ENCODE measurements at regions of chr7 and their contacts with region 1.

Region 1: DNA sequence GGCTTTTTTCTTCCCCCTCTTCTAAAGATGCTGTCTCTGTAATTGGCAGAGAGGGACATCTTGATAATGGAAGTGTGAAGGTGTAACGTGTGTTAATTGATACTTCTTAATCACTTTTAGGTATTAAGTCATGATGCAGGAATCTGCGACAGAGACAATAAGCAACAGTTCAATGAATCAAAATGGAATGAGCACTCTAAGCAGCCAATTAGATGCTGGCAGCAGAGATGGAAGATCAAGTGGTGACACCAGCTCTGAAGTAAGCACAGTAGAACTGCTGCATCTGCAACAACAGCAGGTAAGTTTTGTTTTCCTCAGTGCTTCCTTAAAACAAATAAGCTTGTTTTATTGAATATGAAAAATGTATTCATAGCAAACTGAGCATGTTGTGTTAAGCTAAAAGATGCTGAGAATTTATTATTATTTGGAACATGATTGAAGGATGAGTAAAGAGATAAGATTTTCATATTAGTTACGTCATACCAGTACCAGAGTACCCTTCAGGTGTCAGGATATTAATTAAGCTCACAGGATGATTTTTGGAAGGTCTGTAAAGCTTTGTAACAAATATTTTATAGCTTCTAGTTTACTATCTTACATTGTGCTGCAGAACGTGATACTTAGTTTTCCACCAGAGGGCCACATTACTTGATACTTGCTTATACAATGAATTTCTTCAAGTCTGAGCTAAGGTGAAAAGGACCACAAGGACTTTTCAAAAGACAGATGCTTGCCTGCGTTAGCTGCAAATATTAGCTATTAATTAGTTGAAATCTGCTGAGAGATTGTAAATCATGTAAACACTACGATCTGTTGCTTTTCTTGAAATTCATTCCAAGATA is 12.0 kb downstream of the FOXP2 start:
- DNase-seq: no peak
- ATAC-seq: 0 out of 2 replicates have a peak, but pooled peaks have one; percentile 65
- H3K4me3 ChIP-seq: no peak overlapping the region
- H3K27ac ChIP-seq: no peak overlapping the region
- H3K4me1 ChIP-seq: no peaks in the 10 kb centered on the region; the same call in 1 of the 2 replicates
- H3K27me3 ChIP-seq: no peaks in the 10 kb centered on the region
- CTCF ChIP-seq: peak; percentile 46; the same call in 1 of the 2 replicates

Region 2: DNA sequence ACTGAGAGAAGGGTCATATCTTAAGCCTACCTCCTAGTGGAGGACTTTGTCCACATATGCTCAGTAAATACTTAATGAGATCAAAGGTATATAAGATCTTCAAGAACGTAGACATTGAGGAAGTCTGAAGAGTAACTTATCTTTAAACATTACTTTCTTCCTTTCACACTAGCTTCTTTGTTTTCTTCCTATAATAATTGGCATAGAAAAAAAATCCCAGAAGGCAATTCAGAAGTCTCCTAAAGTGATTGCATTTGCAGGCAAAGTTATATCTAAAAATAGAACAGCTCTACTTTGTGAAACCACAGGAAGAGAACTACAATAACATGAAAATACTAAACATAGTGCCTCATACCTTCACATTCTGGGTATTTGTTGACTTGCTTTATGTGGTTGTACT is 658.2 kb before region 1 on chr7:
- CTCF ChIA-PET with region 1: no interaction called
- POLR2A ChIA-PET with region 1: no interaction called
- in situ Hi-C with region 1: no loop called
- intact Hi-C with region 1: no loop called
- DNase-seq: no peak
- ATAC-seq: no peak
- H3K4me3 ChIP-seq: no peak overlapping the region
- H3K27ac ChIP-seq: no peak overlapping the region
- H3K4me1 ChIP-seq: no peaks in the 10 kb centered on the region
- H3K27me3 ChIP-seq: no peaks in the 10 kb centered on the region
- CTCF ChIP-seq: no peak

Region 3: DNA sequence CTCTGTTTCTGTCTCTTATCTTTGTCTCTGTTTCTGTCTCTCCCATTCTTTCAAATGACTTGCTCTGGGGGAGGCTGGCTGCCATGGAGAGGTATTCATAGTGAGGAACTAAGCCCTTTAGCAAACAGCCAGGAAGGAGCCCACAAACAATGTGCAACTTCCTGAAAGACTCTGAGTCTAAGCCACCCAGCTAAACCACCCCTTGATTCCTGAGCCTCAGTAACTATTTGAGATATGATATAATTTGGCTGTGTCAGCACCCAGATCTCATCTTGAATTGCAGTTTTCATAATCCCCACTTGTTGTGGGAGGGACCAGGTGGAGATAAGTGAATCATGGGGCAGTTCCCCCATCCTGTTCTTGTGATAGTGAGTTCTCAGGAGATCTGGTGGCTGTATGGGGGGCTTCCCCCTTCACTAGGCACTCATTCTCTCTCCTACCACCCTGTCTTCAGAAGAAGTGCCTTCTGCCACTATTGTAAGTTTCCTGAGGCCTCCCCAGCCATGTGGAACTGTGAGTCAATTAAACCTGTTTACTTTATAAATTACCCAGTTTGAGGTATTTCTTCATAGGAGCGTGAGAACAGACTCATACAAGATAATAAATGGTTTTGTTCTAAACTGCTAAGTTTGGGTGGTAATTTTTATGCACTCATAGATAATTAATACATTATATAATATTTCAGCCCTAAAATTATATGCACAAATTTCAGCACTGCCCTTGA is 133.2 kb before region 1 on chr7:
- CTCF ChIA-PET with region 1: no interaction called
- POLR2A ChIA-PET with region 1: no interaction called
- in situ Hi-C with region 1: no loop called
- intact Hi-C with region 1: no loop called
- DNase-seq: no peak
- ATAC-seq: no peak
- H3K4me3 ChIP-seq: no peak overlapping the region
- H3K27ac ChIP-seq: no peak overlapping the region
- H3K4me1 ChIP-seq: no peaks in the 10 kb centered on the region; the same call in 1 of the 2 replicates
- H3K27me3 ChIP-seq: no peaks in the 10 kb centered on the region
- CTCF ChIP-seq: no peak

Region 4: DNA sequence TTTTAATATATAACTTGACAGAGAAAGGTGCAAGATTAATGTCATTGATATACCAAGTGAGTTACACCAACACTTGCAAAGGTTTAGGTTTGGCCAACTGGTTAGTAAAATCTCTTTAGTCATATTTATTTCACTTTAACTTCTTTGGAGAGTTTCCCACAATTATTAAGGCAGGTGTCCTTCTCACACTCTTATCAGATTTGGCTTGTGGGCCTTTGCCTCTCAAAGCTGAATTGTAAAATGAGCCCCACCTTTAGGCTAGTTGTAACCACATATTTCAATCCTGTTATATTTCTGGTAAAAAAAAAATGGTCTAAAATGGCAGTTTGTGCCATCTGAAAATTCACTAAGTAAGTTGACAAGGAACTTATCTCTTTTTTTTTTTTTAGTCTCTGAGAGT is 38.6 kb before region 1 on chr7:
- CTCF ChIA-PET with region 1: no interaction called
- POLR2A ChIA-PET with region 1: no interaction called
- in situ Hi-C with region 1: no loop called
- intact Hi-C with region 1: no loop called
- DNase-seq: no peak
- ATAC-seq: no peak
- H3K4me3 ChIP-seq: no peak overlapping the region
- H3K27ac ChIP-seq: no peak overlapping the region
- H3K4me1 ChIP-seq: no peaks in the 10 kb centered on the region
- H3K27me3 ChIP-seq: no peaks in the 10 kb centered on the region
- CTCF ChIP-seq: no peak

Region 5: GRCh38 chr7:114539575-114539974 is 113.0 kb after region 1 on chr7:
- CTCF ChIA-PET with region 1: no interaction called
- POLR2A ChIA-PET with region 1: no interaction called
- in situ Hi-C with region 1: no loop called
- intact Hi-C with region 1: loop called (anchors 2 kb)
- DNase-seq: no peak
- ATAC-seq: no peak
- H3K4me3 ChIP-seq: no peak overlapping the region
- H3K27ac ChIP-seq: no peak overlapping the region
- H3K4me1 ChIP-seq: no peaks in the 10 kb centered on the region
- H3K27me3 ChIP-seq: no peaks in the 10 kb centered on the region
- CTCF ChIP-seq: peak; percentile 37; the same call in 1 of the 2 replicates

Region 6: DNA sequence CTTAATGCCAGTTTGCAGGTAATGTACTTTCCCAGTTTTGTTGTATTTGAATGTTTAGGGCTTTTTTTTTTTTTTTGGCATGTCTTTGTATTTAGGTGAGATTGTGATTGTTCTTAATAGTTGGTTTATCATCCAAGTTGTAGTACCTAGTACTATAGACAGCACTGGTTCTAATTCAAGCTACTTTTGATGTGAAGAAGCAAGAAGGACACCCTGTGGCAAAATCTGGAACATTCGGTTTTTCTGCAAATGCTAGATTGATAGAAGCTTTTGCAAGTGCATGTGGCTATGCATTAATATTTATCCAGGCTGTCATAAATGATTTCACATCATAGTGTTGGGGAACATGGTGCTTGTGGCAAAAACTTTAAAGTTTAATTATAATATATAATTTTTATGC is 236.9 kb after region 1 on chr7:
- CTCF ChIA-PET with region 1: interaction called, 11 read pairs
- POLR2A ChIA-PET with region 1: no interaction called
- in situ Hi-C with region 1: no loop called
- intact Hi-C with region 1: loop called (anchors 2 kb)
- DNase-seq: no peak
- ATAC-seq: peak; percentile 58; the same call in 1 of the 2 replicates
- H3K4me3 ChIP-seq: no peak overlapping the region
- H3K27ac ChIP-seq: no peak overlapping the region
- H3K4me1 ChIP-seq: peaks cover 3% of the 10 kb centered on the region
- H3K27me3 ChIP-seq: no peaks in the 10 kb centered on the region
- CTCF ChIP-seq: peak; percentile 24; the same call in 1 of the 2 replicates